ENCODE measurements at regions of chr2 and their contacts with region 1.

Region 1: DNA sequence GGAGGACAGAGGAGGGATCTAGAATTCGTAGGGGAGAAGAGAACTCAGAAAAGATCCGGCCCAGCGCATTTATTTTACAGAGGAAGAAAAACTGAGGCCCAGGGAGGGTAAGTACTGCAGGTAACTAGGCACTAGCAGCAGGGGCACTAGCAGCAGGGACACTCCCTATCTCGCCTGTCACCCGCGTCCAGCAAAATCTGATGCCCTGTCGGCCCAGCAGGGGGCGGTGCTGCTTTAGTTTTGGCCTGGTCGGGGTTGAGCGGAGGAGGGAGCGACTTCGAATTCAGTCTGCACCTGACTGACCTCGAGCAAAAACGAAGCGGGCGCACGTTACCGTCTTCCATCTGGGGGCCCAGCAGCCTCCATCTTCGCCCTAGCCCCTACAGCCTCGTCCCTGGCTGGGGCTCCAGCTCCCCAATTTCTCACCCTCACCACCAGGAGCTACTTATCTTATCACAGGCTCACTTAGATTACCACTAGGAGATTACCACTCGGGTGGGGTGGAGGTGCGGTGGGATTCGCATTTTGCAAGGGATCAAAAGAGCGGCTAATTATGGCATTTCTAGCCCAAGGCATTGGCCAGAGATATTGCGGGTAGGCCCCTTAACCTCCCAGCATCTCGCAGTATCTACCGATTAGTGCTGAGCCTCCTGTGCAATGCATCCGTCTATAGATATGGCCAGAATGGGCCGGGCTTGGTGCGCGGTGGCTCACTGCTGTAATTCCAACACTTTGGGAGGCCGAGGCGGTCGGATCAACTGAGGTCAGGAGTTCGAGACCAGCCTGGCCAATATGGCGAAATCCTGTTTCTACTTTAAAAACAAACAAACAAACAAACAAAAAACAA is 17.8 kb upstream of the CD8A start:
- DNase-seq: peak; percentile 99
- ATAC-seq: peak; percentile 73
- H3K4me3 Mint-ChIP-seq: peak overlapping the region; percentile 90
- H3K27ac Mint-ChIP-seq: peak overlapping the region; percentile 93
- H3K4me1 Mint-ChIP-seq: peaks cover 56% of the 10 kb centered on the region
- H3K27me3 Mint-ChIP-seq: no peaks in the 10 kb centered on the region

Region 2: GRCh38 chr2:86750240-86750839 is 58.2 kb before region 1 on chr2:
- CTCF ChIA-PET with region 1: no interaction called
- DNase-seq: no peak
- ATAC-seq: no peak
- H3K4me3 Mint-ChIP-seq: no peak overlapping the region
- H3K27ac Mint-ChIP-seq: no peak overlapping the region
- H3K4me1 Mint-ChIP-seq: peaks cover 24% of the 10 kb centered on the region
- H3K27me3 Mint-ChIP-seq: no peaks in the 10 kb centered on the region

Region 3: GRCh38 chr2:86764661-86765307 is 43.8 kb before region 1 on chr2:
- CTCF ChIA-PET with region 1: interaction called, 62 read pairs
- DNase-seq: peak; percentile 72
- ATAC-seq: peak; percentile 84
- H3K4me3 Mint-ChIP-seq: no peak overlapping the region
- H3K27ac Mint-ChIP-seq: peak overlapping the region; percentile 55
- H3K4me1 Mint-ChIP-seq: peaks cover 32% of the 10 kb centered on the region
- H3K27me3 Mint-ChIP-seq: no peaks in the 10 kb centered on the region

Region 4: GRCh38 chr2:86783615-86784339 is 24.8 kb before region 1 on chr2:
- CTCF ChIA-PET with region 1: interaction called, 148 read pairs
- DNase-seq: no peak
- ATAC-seq: no peak
- H3K4me3 Mint-ChIP-seq: peak overlapping the region; percentile 27
- H3K27ac Mint-ChIP-seq: peak overlapping the region; percentile 100
- H3K4me1 Mint-ChIP-seq: peaks cover 57% of the 10 kb centered on the region
- H3K27me3 Mint-ChIP-seq: no peaks in the 10 kb centered on the region

Region 5: GRCh38 chr2:86790676-86791572 is 17.6 kb before region 1 on chr2 and contains the start of gene CD8A:
- CTCF ChIA-PET with region 1: interaction called, 148 read pairs
- DNase-seq: peak; percentile 92
- ATAC-seq: peak; percentile 43
- H3K4me3 Mint-ChIP-seq: peak within 1 kb of the TSS; percentile 92
- H3K27ac Mint-ChIP-seq: peak within 1 kb of the TSS; percentile 99
- H3K4me1 Mint-ChIP-seq: peaks cover 68% of the 10 kb centered on the region
- H3K27me3 Mint-ChIP-seq: no peaks in the 10 kb centered on the region
- total RNA-seq, gene CD8A: 686 to 756 TPM

Region 6: DNA sequence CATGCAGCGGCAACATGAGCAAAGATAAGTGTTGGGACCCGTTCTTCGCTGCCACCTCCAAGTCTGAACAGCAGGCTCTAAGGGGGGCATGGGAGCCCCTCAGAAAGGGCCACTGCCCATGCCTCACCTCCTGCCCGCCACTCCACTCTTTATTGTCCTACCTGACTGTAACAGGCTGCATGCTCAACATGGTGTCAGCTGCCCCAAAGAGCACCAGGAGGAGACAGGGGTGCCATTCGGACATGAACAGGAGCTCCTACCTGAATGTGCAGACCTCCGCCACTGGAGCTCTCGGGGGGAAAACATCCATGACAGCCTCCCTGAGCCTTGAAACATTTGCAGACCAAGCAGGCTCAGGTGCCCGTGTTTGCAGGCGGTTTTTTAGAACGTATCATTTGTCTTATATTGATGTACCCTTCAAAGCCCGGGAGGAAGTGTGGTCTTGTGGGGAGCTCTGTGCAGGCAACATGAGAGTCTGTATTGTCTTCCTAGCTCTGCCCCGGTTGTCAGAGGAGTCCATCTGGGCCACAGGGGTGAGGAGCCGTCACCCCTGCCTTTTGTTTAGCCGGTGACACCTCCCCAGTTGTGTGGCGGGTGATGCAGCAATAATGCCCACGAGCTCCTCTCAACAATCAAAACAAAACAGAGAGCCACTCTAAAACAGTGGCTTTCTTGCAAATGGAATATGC is 17.3 kb after region 1 on chr2:
- CTCF ChIA-PET with region 1: interaction called, 72 read pairs
- DNase-seq: peak; percentile 95
- ATAC-seq: peak; percentile 79
- H3K4me3 Mint-ChIP-seq: peak overlapping the region; percentile 81
- H3K27ac Mint-ChIP-seq: peak overlapping the region; percentile 97
- H3K4me1 Mint-ChIP-seq: peaks cover 77% of the 10 kb centered on the region
- H3K27me3 Mint-ChIP-seq: no peaks in the 10 kb centered on the region